Activated CD4-positive, alpha-beta memory T cell treated with anti-CD3 and anti-CD28 coated beads for 36 hours (primary cell): ENCODE measurements at regions of chr2 and their contacts with region 1.

Region 1: DNA sequence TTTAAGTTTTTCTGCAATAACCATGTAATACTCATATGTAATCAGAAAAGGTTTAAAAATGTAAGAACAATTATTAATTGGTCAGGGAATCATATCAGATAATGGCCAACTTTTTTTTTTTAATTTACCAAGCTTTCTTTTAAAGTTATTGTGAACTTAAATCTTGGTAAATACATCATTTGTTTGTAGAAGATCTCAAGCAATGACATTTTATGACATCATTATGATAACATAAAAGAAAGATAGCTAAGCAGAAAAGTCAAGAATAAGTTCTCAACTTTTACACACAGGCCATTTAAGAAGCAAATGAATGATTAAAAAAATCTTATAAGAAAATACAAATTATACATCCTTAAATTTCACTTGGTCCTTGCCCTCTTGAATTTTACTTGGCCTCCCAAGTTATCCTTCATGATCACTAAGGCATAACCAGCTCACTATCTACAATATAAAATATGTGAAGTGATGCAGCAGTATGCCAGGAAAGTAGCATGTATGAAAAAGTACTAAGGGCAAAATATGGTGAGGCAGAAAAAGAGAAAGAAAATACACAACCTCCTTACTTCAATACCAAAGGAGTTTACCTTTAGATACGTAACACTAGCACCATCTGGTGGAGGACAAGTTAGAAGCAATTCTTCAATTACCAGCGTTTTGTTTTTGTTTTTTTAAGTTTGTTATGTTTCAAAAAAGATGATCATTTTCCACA is 116.6 kb downstream of the SRBD1 start:
- DNase-seq: no peak
- H3K4me3 Mint-ChIP-seq: no peak overlapping the region
- H3K27ac Mint-ChIP-seq: no peak overlapping the region
- H3K4me1 Mint-ChIP-seq: peaks cover 40% of the 10 kb centered on the region
- H3K27me3 Mint-ChIP-seq: no peaks in the 10 kb centered on the region

Region 2: DNA sequence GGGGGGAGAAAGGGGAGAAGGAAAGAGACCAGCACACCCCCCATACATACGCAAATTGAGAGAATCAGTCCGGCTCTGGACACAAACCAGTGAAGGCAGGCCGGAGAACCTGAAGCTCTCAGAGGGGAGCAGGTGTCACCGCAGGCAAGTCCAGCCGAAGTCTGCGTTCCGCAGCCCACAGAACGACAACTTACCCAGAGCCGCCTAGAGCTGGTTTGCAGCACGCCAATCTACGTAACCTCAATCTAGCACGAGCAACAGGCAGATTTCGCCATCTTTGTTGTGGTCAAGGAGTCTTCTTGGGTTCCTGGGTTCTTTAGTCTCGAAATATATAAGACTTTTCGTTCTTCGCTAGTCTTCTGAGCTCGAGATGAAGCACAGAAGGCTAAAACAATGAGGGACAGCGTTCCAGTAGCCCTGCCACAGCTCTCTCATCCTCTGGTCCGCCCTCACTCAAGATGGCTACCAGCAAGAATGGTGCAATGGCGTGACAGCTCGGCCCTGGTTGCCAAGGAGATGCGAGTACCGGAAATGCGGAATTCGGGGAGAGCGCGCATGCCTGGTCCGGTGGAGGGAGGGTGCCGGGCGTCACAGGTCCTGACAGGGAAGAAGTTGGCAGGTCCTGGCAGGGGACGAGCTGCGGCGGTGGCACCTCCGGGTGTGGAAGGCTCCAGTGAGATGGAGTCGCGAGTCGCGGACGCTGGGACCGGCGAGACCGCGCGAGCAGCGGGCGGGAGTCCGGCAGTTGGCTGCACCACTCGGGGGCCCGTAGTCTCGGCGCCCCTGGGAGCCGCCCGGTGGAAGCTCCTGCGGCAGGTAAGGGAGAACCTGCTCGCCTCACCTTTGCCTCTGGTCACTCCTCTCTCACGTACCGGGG is 1132.9 kb before region 1 on chr2 and contains the starts of genes CAMKMT and PREPL:
- CTCF ChIA-PET with region 1: no interaction called
- POLR2A ChIA-PET with region 1: no interaction called
- intact Hi-C with region 1: loop called (anchors 10 kb)
- DNase-seq: peak; percentile 99
- H3K4me3 Mint-ChIP-seq: peak within 1 kb of the TSS; percentile 96
- H3K27ac Mint-ChIP-seq: peak within 1 kb of the TSS; percentile 99
- H3K4me1 Mint-ChIP-seq: peaks cover 48% of the 10 kb centered on the region
- H3K27me3 Mint-ChIP-seq: no peaks in the 10 kb centered on the region
- total RNA-seq, gene CAMKMT: 9.3 to 11.3 TPM
- total RNA-seq, gene PREPL: 25.2 to 32.1 TPM

Region 3: GRCh38 chr2:44974064-44974715 is 520.2 kb before region 1 on chr2:
- CTCF ChIA-PET with region 1: interaction called, 19 read pairs
- POLR2A ChIA-PET with region 1: no interaction called
- intact Hi-C with region 1: no loop called
- DNase-seq: no peak
- H3K4me3 Mint-ChIP-seq: no peak overlapping the region
- H3K27ac Mint-ChIP-seq: no peak overlapping the region
- H3K4me1 Mint-ChIP-seq: no peaks in the 10 kb centered on the region
- H3K27me3 Mint-ChIP-seq: peaks cover 8% of the 10 kb centered on the region

Region 4: GRCh38 chr2:45391866-45392265 is 102.6 kb before region 1 on chr2:
- CTCF ChIA-PET with region 1: no interaction called
- POLR2A ChIA-PET with region 1: no interaction called
- intact Hi-C with region 1: no loop called
- DNase-seq: no peak
- H3K4me3 Mint-ChIP-seq: no peak overlapping the region
- H3K27ac Mint-ChIP-seq: no peak overlapping the region
- H3K4me1 Mint-ChIP-seq: no peaks in the 10 kb centered on the region
- H3K27me3 Mint-ChIP-seq: no peaks in the 10 kb centered on the region

Region 5: DNA sequence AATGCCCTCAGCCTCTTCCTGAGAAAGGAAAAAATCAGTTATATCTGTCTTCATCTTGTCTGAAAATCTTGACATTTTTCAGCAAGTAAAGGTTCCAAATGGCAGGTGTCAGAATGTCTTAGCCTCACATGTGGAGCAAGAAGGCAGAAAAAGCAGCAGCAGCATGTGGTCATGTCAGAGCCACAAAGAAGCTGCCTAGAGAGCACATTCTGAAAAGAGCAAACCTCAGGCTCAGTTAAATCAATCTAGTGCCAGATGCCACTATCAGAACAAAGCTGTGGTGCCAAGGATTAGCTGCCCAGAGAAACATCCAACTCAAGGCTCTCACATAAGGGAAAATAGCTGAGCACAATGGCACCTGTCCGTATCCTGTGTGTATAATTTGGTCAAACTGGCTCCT is 10.7 kb after region 1 on chr2:
- CTCF ChIA-PET with region 1: interaction called, 14 read pairs
- POLR2A ChIA-PET with region 1: no interaction called
- intact Hi-C with region 1: no loop called
- DNase-seq: no peak
- H3K4me3 Mint-ChIP-seq: no peak overlapping the region
- H3K27ac Mint-ChIP-seq: no peak overlapping the region
- H3K4me1 Mint-ChIP-seq: peaks cover 4% of the 10 kb centered on the region
- H3K27me3 Mint-ChIP-seq: no peaks in the 10 kb centered on the region

Region 6: DNA sequence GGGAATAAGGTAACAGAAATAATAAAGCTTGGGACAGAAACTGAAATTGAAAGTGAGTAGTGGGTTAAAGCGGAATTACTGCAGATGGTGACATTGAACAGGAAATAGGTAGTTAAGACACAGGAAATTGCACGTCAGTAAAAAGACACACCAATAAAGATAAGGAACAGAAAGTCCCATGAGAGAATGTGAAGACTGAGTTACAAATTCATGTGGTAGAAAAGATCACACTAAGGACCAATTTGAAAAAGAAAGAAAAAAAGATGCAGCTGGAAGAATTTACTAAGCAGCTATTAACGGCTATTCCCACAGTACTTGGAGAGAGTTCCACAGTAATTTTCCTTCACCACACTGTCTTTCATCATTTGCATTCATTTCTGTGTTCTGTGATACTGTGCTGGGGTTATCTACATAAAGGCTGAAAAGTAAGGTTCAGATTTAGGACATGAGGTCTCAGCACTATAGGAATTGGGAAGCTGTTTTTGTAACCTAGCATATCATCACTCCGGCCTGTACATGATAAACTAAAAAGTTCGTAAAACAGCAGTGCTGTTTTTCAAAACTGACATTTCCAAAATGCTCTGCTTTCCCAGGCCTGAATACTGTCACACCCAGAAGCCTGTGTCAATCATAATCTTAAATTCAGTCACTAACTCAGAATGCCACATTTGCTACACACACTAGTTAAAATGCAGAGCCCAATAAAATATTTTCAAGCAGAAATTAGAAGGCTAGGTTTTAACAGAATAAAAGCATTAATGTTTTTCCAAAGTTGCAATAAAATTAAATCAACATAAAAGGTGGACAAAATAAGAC is 73.8 kb after region 1 on chr2:
- CTCF ChIA-PET with region 1: interaction called, 4 read pairs
- POLR2A ChIA-PET with region 1: no interaction called
- intact Hi-C with region 1: loop called (anchors 1 kb)
- DNase-seq: no peak
- H3K4me3 Mint-ChIP-seq: peak overlapping the region; percentile 60
- H3K27ac Mint-ChIP-seq: peak overlapping the region; percentile 89
- H3K4me1 Mint-ChIP-seq: peaks cover 20% of the 10 kb centered on the region
- H3K27me3 Mint-ChIP-seq: no peaks in the 10 kb centered on the region